SK-N-SH (cell line): ENCODE measurements at regions of chr10 and their contacts with region 1.

Region 1: GRCh38 chr10:127196230-127196954 is at the start of gene INSYN2A:
- DNase-seq: peak; percentile 78
- H3K4me3 ChIP-seq: peak within 1 kb of the TSS; percentile 46 to 66
- H3K27ac ChIP-seq: no peak within 1 kb of the TSS
- H3K4me1 ChIP-seq: peaks cover 0 to 10% of the 10 kb centered on the region in 2 experiments; a peak in 1 of 4 replicates
- H3K27me3 ChIP-seq: no peaks in the 10 kb centered on the region
- CTCF ChIP-seq: peak; percentile 37
- EP300 ChIP-seq: no peak
- RAD21 ChIP-seq: no peak; the same call in 1 of the 2 replicates
- polyA plus RNA-seq, gene INSYN2A: 0.19 and 0.28 TPM in 2 replicates

Region 2: DNA sequence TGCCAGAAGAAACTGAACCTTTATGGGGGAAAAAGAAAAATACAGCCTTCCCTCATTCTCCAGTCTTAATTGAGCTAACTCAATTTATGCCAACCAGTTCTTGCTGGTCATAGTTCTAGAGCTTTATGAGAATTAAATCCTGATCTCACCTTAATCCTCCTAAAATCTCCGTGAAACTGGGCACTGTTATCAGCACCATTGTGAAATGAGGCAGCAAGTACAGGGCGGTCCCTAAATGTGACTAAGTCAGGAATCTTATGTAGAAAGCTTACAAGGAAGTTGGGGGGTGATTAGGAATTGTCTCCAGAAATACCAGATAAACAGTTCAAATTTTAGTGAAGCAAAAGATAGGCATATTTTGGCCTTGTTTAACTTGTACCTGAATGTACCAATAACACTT is 10.7 kb after region 1 on chr10:
- CTCF ChIA-PET with region 1: interaction called, 29 read pairs
- POLR2A ChIA-PET with region 1: no interaction called
- DNase-seq: no peak
- H3K4me3 ChIP-seq: no peak overlapping the region
- H3K27ac ChIP-seq: no peak overlapping the region
- H3K4me1 ChIP-seq: no peaks in the 10 kb centered on the region
- H3K27me3 ChIP-seq: no peaks in the 10 kb centered on the region
- CTCF ChIP-seq: no peak
- EP300 ChIP-seq: no peak
- RAD21 ChIP-seq: no peak